Sigmoid colon (tissue), 7 donors: ENCODE measurements at regions of chr4 and their contacts with region 1.

Region 1: DNA sequence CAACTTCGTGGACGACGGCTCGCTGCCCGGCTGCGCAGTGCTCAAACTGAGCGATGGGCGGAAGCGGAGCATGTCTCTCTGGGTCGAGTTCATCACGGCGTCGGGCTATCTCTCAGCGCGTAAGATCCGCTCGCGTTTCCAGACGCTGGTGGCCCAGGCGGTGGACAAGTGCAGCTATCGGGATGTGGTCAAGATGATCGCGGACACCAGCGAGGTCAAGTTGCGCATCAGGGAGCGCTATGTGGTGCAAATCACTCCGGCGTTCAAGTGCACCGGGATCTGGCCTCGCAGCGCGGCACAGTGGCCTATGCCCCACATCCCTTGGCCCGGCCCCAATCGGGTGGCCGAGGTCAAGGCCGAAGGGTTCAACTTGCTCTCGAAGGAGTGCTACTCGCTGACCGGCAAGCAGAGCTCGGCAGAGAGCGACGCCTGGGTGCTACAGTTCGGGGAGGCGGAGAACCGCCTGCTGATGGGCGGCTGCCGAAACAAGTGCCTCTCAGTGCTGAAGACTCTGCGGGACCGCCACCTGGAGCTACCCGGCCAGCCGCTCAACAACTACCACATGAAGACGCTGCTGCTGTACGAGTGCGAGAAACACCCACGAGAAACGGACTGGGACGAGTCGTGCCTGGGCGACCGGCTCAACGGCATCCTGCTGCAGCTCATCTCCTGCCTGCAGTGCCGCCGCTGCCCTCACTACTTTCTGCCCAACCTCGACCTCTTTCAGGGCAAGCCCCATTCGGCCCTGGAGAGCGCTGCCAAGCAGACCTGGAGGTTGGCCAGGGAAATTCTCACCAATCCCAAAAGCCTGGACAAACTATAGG is 1.5 kb downstream of the MAB21L2 start:
- DNase-seq: peak; percentile 85
- H3K4me3 ChIP-seq: peak overlapping the region; percentile 76 to 96 (median 81)
- H3K27ac ChIP-seq: peak overlapping the region in 3 of 4 donors; percentile 90 to 93 (median 92)
- H3K4me1 ChIP-seq: no peaks in the 10 kb centered on the region
- H3K27me3 ChIP-seq: no peaks in the 10 kb centered on the region
- CTCF ChIP-seq: no peak
- EP300 ChIP-seq: no peak
- POLR2A ChIP-seq: no peak

Region 2: GRCh38 chr4:149999485-150000074 is 583.9 kb before region 1 on chr4:
- intact Hi-C with region 1: loop called (anchors 5 kb)
- DNase-seq: peak; percentile 71
- H3K4me3 ChIP-seq: no peak overlapping the region
- H3K27ac ChIP-seq: no peak overlapping the region
- H3K4me1 ChIP-seq: peaks cover 0 to 46% (median 35%) of the 10 kb centered on the region in 4 donors
- H3K27me3 ChIP-seq: no peaks in the 10 kb centered on the region
- CTCF ChIP-seq: peak; percentile 57 to 75 (median 65)
- EP300 ChIP-seq: no peak
- POLR2A ChIP-seq: no peak

Region 3: DNA sequence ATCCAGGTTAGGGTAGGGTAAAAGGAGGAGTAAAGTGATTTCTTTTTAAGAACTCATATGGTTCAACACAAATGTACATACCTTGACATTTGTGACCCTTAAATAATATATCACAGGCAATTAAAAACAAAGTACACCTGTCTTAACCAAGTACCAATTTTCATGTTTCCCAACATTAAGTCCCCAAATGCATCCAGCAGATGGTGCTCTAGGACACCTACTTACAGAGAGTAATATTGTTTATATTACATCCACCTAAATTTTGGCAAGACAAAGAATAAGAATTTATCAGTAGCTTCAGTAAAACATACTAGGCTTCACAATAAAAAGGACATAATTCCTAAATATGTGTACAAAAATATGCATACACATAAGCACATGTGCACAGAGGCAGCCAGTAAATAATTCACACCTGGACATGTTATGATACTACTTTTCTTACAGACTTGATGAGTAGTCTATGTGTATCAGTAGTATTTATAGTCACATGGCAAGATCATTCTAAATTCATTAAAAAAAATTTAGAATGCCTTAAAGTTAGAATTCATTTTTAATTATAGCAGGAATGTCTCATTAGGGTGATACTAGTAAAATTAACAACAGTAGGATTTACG is 285.5 kb before region 1 on chr4:
- intact Hi-C with region 1: loop called (anchors 1 kb)
- DNase-seq: peak; percentile 76
- H3K4me3 ChIP-seq: peak overlapping the region in 1 of 4 donors; percentile 41
- H3K27ac ChIP-seq: peak overlapping the region in 3 of 4 donors; percentile 67 to 77 (median 69)
- H3K4me1 ChIP-seq: peaks cover 0 to 46% (median 13%) of the 10 kb centered on the region in 4 donors
- H3K27me3 ChIP-seq: no peaks in the 10 kb centered on the region
- CTCF ChIP-seq: peak in 3 of 4 experiments; percentile 60 to 64 (median 60)
- EP300 ChIP-seq: no peak
- POLR2A ChIP-seq: no peak

Region 4: DNA sequence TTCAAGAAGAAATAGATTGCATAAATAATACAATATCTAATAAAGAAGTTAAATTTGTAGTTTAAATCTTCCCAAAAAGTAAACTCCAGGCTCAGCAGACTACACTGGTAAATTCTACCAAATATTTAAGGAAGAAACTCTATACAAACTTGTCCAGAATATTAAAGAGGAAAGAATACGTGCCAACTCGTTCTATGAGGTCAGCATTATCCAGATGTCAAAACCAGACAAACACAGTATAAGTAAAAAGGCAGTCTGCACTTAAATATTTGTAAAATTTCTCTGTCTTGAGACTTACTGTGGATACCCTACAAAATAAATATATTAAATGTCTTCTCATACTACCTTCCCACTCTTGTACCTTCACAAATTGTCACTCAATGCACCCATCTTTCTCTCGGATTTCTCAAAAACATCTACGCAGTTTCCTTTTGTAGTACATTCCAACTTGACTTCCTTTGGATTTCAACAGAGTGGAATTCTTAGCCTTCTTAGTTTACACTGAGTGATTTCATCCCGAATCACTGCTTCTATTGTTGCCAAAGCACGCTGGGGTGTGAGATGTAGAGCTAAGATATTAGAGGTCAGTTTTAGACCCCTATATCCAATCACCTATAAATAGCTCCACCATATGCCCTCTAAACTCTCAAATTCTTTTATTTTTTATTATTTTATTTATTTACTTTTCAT is 73.2 kb before region 1 on chr4:
- intact Hi-C with region 1: loop called (anchors 5 kb)
- DNase-seq: no peak
- H3K4me3 ChIP-seq: peak overlapping the region; percentile 1 to 29 (median 14)
- H3K27ac ChIP-seq: peak overlapping the region in 3 of 4 donors; percentile 64 to 82 (median 78)
- H3K4me1 ChIP-seq: peaks cover 0 to 32% (median 13%) of the 10 kb centered on the region in 4 donors
- H3K27me3 ChIP-seq: no peaks in the 10 kb centered on the region
- CTCF ChIP-seq: no peak
- EP300 ChIP-seq: no peak
- POLR2A ChIP-seq: no peak